Gastrocnemius medialis (tissue), 4 donors: ENCODE measurements at regions of chr6 and their contacts with region 1.

Region 1: DNA sequence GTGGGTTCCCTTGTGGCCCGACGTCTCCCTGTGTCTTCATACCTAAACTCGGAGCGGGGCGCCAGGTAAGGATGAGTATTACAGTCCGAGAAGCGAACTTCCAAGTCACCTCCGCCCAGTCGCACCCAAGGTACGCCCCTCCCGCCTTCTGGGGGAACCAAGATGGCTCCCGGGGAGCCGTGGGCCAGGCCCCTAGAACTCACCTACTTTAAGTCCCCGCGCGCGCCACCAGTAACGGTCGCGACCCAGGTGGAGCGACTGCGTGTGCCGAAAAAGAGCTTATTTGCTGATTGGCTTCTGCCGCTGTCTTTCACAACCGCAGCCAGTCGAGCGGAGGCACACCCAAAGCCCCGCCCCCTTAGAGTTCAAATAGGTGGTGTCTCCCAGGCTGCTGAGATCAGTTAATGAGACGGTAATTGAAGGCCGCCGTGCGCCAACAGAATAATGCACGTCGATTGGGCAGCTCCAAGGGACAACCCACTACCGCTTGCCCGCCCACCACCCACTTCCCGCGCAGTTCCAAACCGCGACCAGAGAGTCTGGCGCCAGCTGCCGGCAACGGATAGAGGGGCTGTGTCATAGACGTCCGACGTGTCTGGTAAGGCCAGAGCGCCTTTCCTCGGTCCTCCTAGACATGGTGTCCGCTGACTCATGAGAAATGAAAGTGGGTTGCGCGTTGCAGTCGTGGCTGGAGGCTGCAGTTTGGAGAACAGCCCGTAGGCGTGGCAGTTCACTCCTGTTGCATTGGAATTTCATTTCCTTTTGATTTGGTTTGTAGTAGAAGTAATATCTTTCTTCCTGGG is at the start of gene MDC1:
- DNase-seq: peak; percentile 100
- ATAC-seq: peak; percentile 79 to 80
- H3K4me3 ChIP-seq: peak within 1 kb of the TSS; percentile 69 to 91 (median 86)
- H3K27ac ChIP-seq: peak within 1 kb of the TSS; percentile 94 to 99 (median 97)
- H3K4me1 ChIP-seq: peaks cover 27 to 30% of the 10 kb centered on the region in 2 donors
- H3K27me3 ChIP-seq: no peaks in the 10 kb centered on the region
- CTCF ChIP-seq: peak; percentile 41 to 57 (median 46)
- POLR2A ChIP-seq: peak; percentile 62 to 91
- total RNA-seq, gene MDC1: 3.6 to 8.9 (median 6.2) TPM

Region 2: DNA sequence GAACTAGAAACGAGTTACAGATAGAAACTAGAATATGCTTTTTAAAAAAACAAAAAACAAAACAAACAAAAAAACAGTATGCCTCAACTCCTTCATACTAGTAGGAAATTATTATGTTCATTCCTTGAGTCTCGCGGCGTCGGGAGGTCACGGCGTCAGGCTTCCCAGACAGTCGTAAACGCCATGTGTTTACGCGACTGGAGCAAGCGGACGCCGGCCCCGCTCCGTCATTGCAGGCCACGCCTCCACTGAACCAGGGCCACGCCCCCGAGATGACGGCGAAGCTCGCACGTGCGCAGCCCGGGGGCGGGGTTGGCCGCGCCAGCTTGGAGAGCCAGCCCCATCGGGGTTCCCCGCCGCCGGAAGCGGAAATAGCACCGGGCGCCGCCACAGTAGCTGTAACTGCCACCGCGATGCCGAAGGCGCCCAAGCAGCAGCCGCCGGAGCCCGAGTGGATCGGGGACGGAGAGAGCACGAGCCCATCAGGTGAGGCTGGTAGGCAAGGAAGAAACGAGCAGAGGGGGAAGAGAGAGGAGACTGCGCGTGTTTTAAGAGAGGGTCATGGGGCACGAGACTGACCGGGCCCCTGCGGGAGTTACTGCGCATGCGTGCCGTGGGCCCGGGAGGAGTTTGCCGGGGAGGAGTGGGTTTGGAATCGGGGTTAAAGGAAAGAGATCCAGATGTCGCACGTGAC is 146.0 kb before region 1 on chr6 and contains the start of gene ABCF1:
- in situ Hi-C with region 1: no loop called
- intact Hi-C with region 1: loop called (anchors 2 kb)
- DNase-seq: peak; percentile 96 to 97
- ATAC-seq: peak; percentile 91 to 94
- H3K4me3 ChIP-seq: peak within 1 kb of the TSS; percentile 72 to 96 (median 78)
- H3K27ac ChIP-seq: peak within 1 kb of the TSS; percentile 91 to 99 (median 94)
- H3K4me1 ChIP-seq: peaks cover 31 to 36% of the 10 kb centered on the region in 2 donors
- H3K27me3 ChIP-seq: no peaks in the 10 kb centered on the region
- CTCF ChIP-seq: no peak
- POLR2A ChIP-seq: peak; percentile 90 to 94
- total RNA-seq, gene ABCF1: 55.8 to 122 (median 111) TPM

Region 3: GRCh38 chr6:30678964-30679726 is 38.1 kb before region 1 on chr6:
- in situ Hi-C with region 1: loop called (anchors 5 kb)
- intact Hi-C with region 1: loop called (anchors 1 kb)
- DNase-seq: peak; percentile 68 to 79
- ATAC-seq: peak; percentile 76 to 83
- H3K4me3 ChIP-seq: peak overlapping the region in 1 of 4 donors; percentile 7
- H3K27ac ChIP-seq: peak overlapping the region in 3 of 4 donors; percentile 25 to 51 (median 38)
- H3K4me1 ChIP-seq: peaks cover 15 to 18% of the 10 kb centered on the region in 2 donors
- H3K27me3 ChIP-seq: no peaks in the 10 kb centered on the region
- CTCF ChIP-seq: peak; percentile 94 to 98 (median 98)
- POLR2A ChIP-seq: no peak

Region 4: GRCh38 chr6:30686908-30687658 is 30.2 kb before region 1 on chr6:
- in situ Hi-C with region 1: loop called in 3 of 4 experiments (anchors 5 kb)
- intact Hi-C with region 1: loop called (anchors 1 kb)
- DNase-seq: peak; percentile 89 to 94
- ATAC-seq: peak; percentile 47 to 60
- H3K4me3 ChIP-seq: peak overlapping the region; percentile 67 to 97 (median 96)
- H3K27ac ChIP-seq: peak overlapping the region; percentile 93 to 99 (median 97)
- H3K4me1 ChIP-seq: peaks cover 39 to 40% of the 10 kb centered on the region in 2 donors
- H3K27me3 ChIP-seq: peaks cover 0 to 2% (median 0%) of the 10 kb centered on the region in 3 donors
- CTCF ChIP-seq: no peak
- POLR2A ChIP-seq: peak; percentile 66 to 70

Region 5: DNA sequence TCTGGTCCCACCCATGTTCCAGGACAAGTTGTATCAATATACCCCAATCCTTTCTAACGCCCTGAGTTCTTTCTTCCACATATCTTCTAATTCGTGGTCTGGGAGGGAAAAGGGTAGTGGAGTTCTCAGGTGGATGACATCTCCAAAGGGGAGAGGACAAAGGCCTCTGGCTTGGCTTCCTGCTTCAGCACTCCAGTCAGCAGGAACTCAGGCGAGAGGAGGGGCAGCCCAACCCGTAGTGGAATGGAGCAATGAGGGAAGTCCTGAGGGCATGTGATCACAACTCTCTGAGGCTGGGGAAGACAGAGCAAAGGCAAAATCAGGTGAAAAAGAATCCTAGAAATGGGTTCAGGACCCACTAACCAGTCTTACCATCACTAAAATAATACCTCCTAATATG is 16.9 kb before region 1 on chr6:
- in situ Hi-C with region 1: no loop called
- intact Hi-C with region 1: loop called (anchors 2 kb)
- DNase-seq: no peak
- ATAC-seq: no peak
- H3K4me3 ChIP-seq: no peak overlapping the region
- H3K27ac ChIP-seq: no peak overlapping the region
- H3K4me1 ChIP-seq: peaks cover 3 to 12% of the 10 kb centered on the region in 2 donors
- H3K27me3 ChIP-seq: no peaks in the 10 kb centered on the region
- CTCF ChIP-seq: no peak
- POLR2A ChIP-seq: no peak

Region 6: DNA sequence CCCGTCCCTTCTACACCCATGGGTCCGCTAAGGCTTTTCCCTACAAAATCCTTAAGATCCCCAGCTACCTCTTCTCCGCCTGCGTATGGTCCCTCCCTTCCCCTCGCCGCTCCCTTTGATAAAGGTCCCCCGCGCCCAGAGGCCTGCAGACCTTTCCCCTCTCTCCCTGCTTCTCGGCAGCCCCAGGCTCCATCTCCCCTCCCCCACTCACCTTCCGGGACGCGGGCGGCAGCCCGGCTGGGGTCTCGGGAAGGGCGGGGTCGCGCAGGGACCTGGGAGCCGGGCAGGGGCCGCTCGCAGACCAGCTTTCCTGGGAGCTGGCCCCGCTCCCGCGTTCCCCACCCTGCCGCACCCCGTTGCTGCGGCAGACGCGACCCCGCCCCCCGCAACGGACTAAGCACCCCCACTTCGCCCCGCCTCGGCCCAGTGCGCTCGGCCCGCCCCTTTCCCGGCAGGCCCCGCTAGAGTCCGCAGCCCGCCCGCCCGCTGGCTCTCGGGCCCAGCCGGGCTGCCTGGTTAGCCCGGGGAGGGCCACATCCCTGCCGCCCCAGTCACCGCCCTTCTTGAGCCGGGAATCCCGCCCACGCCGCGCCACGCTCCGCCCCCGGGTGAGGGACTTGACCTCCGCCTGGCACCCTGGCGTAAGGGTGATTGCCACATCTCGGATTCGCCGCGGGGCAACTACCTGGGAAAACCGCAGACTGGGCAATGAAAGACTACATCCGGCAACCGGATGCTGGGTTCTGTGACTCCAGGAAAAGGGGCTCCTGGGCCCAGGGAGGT is 25.3 kb after region 1 on chr6 and contains the start of gene FLOT1:
- in situ Hi-C with region 1: no loop called
- intact Hi-C with region 1: loop called (anchors 2 kb)
- DNase-seq: peak; percentile 93 to 98
- ATAC-seq: peak; percentile 79 to 84
- H3K4me3 ChIP-seq: peak within 1 kb of the TSS; percentile 63 to 83 (median 74)
- H3K27ac ChIP-seq: peak within 1 kb of the TSS; percentile 86 to 94 (median 86)
- H3K4me1 ChIP-seq: peaks cover 22 to 24% of the 10 kb centered on the region in 2 donors
- H3K27me3 ChIP-seq: no peaks in the 10 kb centered on the region
- CTCF ChIP-seq: peak in 1 of 5 experiments; percentile 8
- POLR2A ChIP-seq: peak; percentile 70 to 71
- total RNA-seq, gene FLOT1: 96.9 to 127 (median 117) TPM

Region 7: DNA sequence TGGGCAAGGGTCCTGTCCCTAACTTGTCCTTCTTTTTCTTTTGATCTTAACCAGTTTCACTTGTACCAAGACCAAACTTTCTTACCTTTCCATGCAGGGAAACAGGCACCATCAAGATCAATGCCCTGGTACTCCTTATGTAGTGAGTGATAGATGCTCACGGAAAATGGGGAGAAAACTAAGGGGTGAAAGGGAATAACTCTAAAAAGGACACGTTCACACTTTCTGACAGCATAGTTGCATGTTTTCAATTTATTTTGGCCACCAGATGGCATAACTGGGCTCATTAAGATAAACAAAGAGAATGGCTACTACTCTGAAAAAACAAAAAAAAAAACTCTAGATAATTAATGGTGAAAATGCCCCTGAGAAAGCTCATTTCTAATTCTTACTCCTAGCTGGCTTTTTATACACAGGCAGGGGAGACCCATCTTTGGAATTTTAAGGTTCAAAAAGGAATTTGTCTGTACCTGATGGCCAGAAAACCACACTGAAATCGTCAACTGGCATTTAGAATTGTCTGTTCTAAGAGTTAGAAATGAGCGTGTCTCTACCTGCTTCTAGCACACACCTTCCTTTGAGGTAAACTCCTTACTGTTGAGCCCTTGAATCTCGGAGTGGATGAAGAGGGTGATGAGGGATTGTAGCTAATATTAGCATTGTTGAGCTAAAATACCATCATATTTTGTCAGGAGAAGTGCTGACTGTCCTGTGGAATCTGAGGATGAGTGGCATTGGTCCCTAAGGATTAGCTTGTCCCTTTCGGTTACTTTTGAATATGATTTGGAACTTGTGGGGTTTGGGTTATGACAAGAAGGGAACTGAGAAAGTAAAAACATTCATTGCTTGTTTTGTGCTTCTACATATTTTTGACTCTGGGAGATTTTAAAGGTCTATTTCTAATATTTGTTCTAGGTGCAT is 104.9 kb after region 1 on chr6:
- in situ Hi-C with region 1: no loop called
- intact Hi-C with region 1: no loop called
- DNase-seq: no peak
- ATAC-seq: no peak
- H3K4me3 ChIP-seq: no peak overlapping the region
- H3K27ac ChIP-seq: peak overlapping the region in 2 of 4 donors; percentile 6 to 10
- H3K4me1 ChIP-seq: peaks cover 16 to 23% of the 10 kb centered on the region in 2 donors
- H3K27me3 ChIP-seq: no peaks in the 10 kb centered on the region
- CTCF ChIP-seq: peak; percentile 34 to 54 (median 50)
- POLR2A ChIP-seq: no peak

Region 8: GRCh38 chr6:32195652-32195901 is 1478.3 kb after region 1 on chr6:
- in situ Hi-C with region 1: no loop called
- intact Hi-C with region 1: loop called (anchors 10 kb)
- DNase-seq: peak; percentile 100
- ATAC-seq: peak in 1 of 2 donors; percentile 83
- H3K4me3 ChIP-seq: peak overlapping the region in 3 of 4 donors; percentile 67 to 86 (median 74)
- H3K27ac ChIP-seq: peak overlapping the region; percentile 91 to 98 (median 96)
- H3K4me1 ChIP-seq: peaks cover 28 to 32% of the 10 kb centered on the region in 2 donors
- H3K27me3 ChIP-seq: no peaks in the 10 kb centered on the region
- CTCF ChIP-seq: peak in 4 of 5 experiments; percentile 54 to 70 (median 56)
- POLR2A ChIP-seq: no peak